Psoas muscle (tissue), 8 donors: ENCODE measurements at regions of chr11 and their contacts with region 1.

Region 1: GRCh38 chr11:107770551-107770951 is 58.7 kb upstream of the SLN start:
- DNase-seq: no peak
- ATAC-seq: peak; percentile 57 to 73 (median 70)
- H3K4me3 ChIP-seq: peak overlapping the region; percentile 0
- H3K27ac ChIP-seq: peak overlapping the region; percentile 85
- H3K4me1 ChIP-seq: peaks cover 16% of the 10 kb centered on the region
- H3K27me3 ChIP-seq: no peaks in the 10 kb centered on the region
- CTCF ChIP-seq: no peak

Region 2: GRCh38 chr11:107577346-107577711 is 193.2 kb before region 1 on chr11:
- intact Hi-C with region 1: loop called (anchors 2 kb)
- DNase-seq: no peak
- ATAC-seq: no peak
- H3K4me3 ChIP-seq: no peak overlapping the region
- H3K27ac ChIP-seq: no peak overlapping the region
- H3K4me1 ChIP-seq: no peaks in the 10 kb centered on the region
- H3K27me3 ChIP-seq: no peaks in the 10 kb centered on the region
- CTCF ChIP-seq: no peak

Region 3: DNA sequence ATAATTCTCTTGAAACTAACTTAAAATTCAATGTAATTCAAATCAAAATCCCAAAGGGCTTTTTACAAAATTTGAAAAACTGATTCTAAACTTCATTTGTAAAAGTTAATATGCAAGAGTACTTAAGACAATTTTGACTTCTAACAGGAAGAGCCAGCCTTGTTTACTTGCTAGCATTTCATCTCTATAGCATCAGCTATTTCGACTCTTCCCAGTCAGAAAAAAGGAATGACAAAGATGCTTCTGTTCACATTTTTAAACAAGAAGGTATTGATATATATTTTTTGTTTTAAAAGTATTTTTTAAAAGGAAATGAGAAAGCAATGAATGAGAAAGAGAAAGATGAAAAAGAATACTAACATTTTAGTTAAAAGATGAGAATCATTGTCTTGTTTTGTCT is 75.1 kb before region 1 on chr11:
- intact Hi-C with region 1: loop called (anchors 2 to 5 kb)
- DNase-seq: no peak
- ATAC-seq: peak in 1 of 4 donors; percentile 44
- H3K4me3 ChIP-seq: no peak overlapping the region
- H3K27ac ChIP-seq: peak overlapping the region; percentile 79
- H3K4me1 ChIP-seq: peaks cover 19% of the 10 kb centered on the region
- H3K27me3 ChIP-seq: no peaks in the 10 kb centered on the region
- CTCF ChIP-seq: no peak

Region 4: DNA sequence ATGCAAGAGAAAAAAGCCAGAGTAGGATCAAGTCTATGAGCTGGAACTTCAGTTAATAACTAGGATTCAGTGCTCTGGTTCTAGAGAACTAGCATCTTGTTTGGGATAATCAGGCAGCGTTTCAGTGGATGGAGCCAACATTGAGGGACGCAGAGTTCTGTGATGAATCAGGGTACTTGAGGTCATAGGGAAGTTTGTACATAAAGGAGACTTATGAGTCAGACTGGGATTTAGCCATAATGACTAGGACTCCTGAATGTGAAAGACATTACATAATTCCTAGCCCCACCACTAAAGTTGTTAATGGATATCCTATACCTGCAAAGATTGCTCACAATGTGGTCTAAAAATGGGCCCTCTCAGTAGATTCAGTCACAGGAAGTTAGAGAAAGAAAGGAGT is 65.5 kb before region 1 on chr11:
- intact Hi-C with region 1: loop called in 1 of 2 experiments (anchors 5 kb)
- DNase-seq: no peak
- ATAC-seq: peak; percentile 69 to 88 (median 87)
- H3K4me3 ChIP-seq: no peak overlapping the region
- H3K27ac ChIP-seq: peak overlapping the region; percentile 91
- H3K4me1 ChIP-seq: peaks cover 43% of the 10 kb centered on the region
- H3K27me3 ChIP-seq: no peaks in the 10 kb centered on the region
- CTCF ChIP-seq: no peak

Region 5: DNA sequence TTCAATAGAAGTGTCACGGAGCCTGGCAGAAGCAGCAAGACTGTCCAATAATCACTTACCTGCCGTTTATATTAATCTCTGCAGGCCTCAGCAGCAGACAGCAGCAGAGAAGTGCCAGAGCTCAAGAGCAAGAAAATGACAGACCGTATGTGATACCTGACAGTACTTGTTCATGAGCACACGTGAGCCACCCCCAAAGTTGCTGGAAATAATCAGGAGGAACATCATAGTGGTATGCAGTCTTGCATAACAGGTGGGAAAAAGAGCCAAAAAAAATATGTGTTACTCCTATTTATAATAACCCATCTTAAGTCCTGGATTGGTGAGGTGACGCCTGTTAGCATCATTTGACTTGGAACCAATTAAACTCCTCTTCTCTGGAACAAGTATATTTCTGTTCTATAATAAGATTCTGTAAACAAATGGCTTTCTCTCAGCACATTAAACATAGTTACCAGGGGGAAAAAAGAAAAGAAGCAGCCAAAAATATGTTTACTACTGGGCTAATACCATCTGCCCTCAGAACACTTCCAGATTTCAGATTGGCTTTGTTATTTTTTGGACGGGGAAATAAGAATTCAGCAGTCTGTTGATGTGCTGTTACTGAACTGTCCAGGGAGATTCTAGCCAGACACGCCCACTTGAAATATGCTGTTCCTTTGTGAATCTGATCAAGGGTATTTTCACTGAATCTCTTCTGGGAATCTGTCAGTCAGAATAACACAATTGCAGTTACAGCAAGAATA is 50.8 kb before region 1 on chr11:
- intact Hi-C with region 1: loop called in 1 of 2 experiments (anchors 2 kb)
- DNase-seq: no peak
- ATAC-seq: peak; percentile 73 to 85 (median 84)
- H3K4me3 ChIP-seq: peak overlapping the region; percentile 52
- H3K27ac ChIP-seq: peak overlapping the region; percentile 91
- H3K4me1 ChIP-seq: peaks cover 54% of the 10 kb centered on the region
- H3K27me3 ChIP-seq: no peaks in the 10 kb centered on the region
- CTCF ChIP-seq: no peak